ENCODE measurements at regions of chr1 and their contacts with region 1.

Region 1: GRCh38 chr1:164480285-164480907 is 78.6 kb upstream of the PBX1 start:
- DNase-seq: no peak
- H3K4me3 ChIP-seq: no peak overlapping the region
- H3K27ac ChIP-seq: no peak overlapping the region
- H3K4me1 ChIP-seq: no peaks in the 10 kb centered on the region
- H3K27me3 ChIP-seq: no peaks in the 10 kb centered on the region
- CTCF ChIP-seq: no peak
- POLR2A ChIP-seq: no peak

Region 2: DNA sequence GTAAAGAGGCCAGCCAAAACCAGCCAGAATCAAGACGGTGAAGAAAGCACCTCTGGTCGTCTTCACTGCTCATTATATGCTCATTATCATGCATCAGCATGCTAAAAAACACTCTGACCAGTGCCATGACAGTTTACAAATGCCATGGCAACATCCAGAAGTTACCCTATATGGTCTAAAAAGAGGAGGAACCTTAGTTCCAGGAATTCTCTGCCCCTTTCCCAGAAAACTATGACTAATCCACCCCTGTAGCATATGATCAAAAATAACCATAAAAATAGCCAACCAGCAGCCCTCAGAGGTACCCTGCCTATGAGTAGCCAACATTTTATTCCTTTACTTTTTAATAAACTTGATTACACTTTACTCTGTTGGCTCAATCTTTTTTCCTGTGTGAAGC is 44.4 kb after region 1 on chr1:
- CTCF ChIA-PET with region 1: no interaction called
- POLR2A ChIA-PET with region 1: no interaction called
- dilution Hi-C with region 1: no loop called
- intact Hi-C with region 1: loop called (anchors 1 kb)
- DNase-seq: no peak
- H3K4me3 ChIP-seq: no peak overlapping the region
- H3K27ac ChIP-seq: no peak overlapping the region
- H3K4me1 ChIP-seq: no peaks in the 10 kb centered on the region
- H3K27me3 ChIP-seq: no peaks in the 10 kb centered on the region
- CTCF ChIP-seq: no peak
- POLR2A ChIP-seq: no peak

Measured in endothelial cell of umbilical vein (primary cell).